ENCODE measurements at regions of chr15 and their contacts with region 1.

Region 1: DNA sequence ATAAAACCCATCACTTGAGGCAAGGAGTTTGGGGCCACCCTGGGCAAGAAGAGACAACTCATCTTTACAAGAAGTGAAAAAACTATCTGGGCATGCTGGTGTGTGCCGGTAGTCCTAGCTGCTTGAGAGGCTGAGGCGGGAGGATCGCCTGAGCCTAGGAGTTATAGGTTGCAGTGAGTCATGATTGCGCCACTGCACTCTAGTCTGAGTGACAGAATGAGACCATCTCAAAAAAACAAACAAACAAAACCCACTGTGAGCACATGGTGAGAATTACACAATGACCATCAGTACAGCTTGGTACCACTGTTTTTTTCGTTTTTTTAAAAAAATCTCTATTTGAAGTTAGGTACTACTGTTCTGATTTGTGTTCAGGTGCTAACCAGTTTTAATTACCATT is 13.6 kb downstream of the VPS39 start:
- DNase-seq: no peak
- H3K4me3 Mint-ChIP-seq: no peak overlapping the region
- H3K27ac Mint-ChIP-seq: peak overlapping the region; percentile 48
- H3K4me1 Mint-ChIP-seq: peaks cover 32% of the 10 kb centered on the region
- H3K27me3 Mint-ChIP-seq: no peaks in the 10 kb centered on the region

Region 2: DNA sequence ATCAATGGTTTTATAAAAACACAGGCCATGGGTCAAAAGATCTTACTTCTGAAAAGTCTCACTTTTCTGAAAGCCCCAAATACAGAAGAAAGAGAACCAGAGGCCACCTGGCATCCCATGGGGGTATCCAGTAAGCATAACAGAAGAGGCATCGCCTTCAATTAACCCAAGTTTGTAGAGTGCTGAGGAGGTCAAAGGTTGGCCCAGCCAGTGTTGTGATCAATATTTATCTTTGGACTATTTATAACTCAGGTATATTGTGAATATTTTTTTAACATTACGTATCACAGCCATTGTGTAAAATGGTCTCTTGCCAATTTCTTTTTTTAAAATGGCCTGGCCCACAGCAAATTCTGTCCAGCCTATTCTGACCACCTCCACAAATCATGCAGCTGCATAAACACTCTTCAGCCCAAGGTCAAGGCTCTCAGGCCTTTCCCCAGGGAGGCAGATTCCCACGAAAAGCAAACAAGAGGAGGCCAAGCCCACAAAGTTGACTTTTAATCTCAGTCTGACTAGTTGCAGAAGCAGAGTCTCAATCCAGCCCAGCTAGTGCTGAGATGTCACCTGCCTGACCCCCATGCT is 274.5 kb before region 1 on chr15:
- intact Hi-C with region 1: no loop called
- DNase-seq: no peak
- H3K4me3 Mint-ChIP-seq: no peak overlapping the region
- H3K27ac Mint-ChIP-seq: no peak overlapping the region
- H3K4me1 Mint-ChIP-seq: peaks cover 51% of the 10 kb centered on the region
- H3K27me3 Mint-ChIP-seq: no peaks in the 10 kb centered on the region

Region 3: DNA sequence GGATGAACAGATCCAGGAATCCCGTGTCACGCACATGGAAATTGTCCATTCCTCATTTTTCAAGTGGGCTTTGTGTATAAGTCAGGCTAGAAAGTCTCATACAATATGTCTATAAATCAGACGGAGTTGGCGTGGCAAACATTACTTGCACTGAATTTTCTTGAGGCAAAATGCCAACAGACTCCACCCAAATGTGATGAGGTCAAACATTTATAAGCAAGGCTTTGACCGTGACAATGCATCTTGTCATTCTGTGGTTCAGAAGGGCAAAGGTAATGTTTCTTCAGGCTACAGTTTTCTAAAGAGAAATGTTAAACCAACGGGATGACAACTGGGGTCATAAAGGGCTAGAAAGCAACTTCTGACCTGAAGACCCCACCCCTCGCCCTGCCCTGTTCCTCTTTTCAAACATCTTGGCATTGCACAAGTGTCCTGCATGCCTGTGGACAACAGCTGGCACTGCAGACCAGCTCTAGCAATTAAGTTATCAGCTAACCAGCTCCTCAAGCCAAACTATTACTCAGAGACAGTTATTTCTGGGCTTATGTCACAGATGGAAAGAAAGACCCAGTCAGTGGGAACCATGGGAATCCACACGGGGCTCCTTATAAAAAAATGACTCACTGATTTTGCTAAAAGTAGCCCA is 264.2 kb before region 1 on chr15:
- intact Hi-C with region 1: loop called (anchors 10 kb)
- DNase-seq: no peak
- H3K4me3 Mint-ChIP-seq: no peak overlapping the region
- H3K27ac Mint-ChIP-seq: no peak overlapping the region
- H3K4me1 Mint-ChIP-seq: peaks cover 60% of the 10 kb centered on the region
- H3K27me3 Mint-ChIP-seq: no peaks in the 10 kb centered on the region

Region 4: DNA sequence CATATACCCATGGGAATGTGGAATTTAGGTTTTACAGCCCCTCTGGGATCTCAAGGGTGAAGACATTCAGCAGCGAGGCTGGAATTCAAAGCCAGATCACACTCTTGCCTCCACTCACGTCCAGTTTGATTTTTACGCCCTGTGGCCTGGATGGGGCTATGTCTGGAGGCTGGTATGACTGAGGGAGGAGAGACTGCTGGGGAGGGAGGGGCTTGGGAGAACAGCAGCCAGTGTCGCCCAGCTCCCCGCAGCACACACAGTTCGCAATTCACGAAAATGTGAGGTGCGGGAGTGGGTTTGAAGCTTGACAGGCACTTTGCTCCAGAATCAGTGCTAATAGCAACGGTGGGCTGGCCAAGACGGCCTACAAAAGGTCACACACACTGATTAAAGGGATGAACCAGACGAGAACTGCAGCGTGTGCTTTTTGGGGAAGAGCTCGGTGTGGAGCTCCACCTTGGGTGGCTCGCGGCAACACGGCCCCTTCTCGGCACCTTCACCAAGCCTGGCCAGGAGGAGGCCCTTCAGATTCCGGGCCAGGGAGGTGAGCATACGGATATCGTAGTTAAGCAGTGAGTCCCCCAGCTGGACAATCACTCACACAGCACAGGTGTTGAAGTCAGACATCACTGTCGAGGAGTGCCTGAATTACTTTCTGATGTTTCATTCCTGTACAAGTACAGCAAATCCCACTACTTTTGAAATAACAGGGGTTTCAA is 238.5 kb before region 1 on chr15:
- intact Hi-C with region 1: no loop called
- DNase-seq: no peak
- H3K4me3 Mint-ChIP-seq: no peak overlapping the region
- H3K27ac Mint-ChIP-seq: no peak overlapping the region
- H3K4me1 Mint-ChIP-seq: peaks cover 39% of the 10 kb centered on the region
- H3K27me3 Mint-ChIP-seq: no peaks in the 10 kb centered on the region

Region 5: DNA sequence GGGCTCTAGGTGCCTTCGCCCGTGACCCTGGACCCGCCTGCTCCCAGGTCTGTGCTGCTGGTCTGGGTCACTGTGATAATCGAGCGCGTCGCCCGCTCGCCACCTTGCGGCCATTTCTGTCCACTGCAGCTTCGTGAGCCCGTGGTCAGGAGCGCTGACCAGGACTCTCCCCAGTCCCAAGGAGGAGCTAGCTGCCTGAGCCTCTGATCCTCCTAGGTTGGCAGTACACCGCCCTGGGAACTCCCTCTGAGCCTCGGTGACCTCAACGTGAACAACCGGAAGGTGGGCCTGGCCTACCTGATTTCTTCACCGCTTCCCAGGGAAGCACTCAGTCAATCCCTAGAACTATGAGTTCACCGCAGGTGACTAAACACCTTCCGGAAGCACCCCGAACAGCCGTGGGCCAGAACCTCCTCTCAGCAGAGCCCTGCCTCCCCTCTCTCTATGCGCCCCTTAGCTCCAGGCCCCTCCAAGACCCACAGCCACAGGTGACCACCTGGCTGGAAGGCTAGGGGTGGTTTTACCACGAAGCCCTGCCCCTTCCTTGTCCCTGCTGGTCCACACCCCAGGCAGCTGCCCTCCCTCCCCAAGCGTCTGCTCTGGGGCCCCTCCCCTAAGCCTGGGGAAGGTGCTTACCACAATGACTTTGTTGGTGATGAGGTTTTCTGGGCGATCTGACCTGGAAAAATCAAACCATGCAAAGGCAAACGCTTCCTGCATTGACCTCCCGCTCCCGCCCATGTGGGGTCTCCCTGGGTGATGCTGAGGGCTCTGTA is 109.9 kb before region 1 on chr15:
- intact Hi-C with region 1: no loop called
- DNase-seq: no peak
- H3K4me3 Mint-ChIP-seq: no peak overlapping the region
- H3K27ac Mint-ChIP-seq: no peak overlapping the region
- H3K4me1 Mint-ChIP-seq: peaks cover 6% of the 10 kb centered on the region
- H3K27me3 Mint-ChIP-seq: peaks cover 6% of the 10 kb centered on the region

Region 6: GRCh38 chr15:42184296-42184695 is 10.2 kb before region 1 on chr15:
- intact Hi-C with region 1: no loop called
- DNase-seq: no peak
- H3K4me3 Mint-ChIP-seq: no peak overlapping the region
- H3K27ac Mint-ChIP-seq: no peak overlapping the region
- H3K4me1 Mint-ChIP-seq: no peaks in the 10 kb centered on the region
- H3K27me3 Mint-ChIP-seq: no peaks in the 10 kb centered on the region

Region 7: GRCh38 chr15:42207674-42208579 is 13.4 kb after region 1 on chr15 and contains the start of gene VPS39:
- intact Hi-C with region 1: loop called (anchors 1 kb)
- DNase-seq: peak; percentile 78
- H3K4me3 Mint-ChIP-seq: peak within 1 kb of the TSS; percentile 97
- H3K27ac Mint-ChIP-seq: peak within 1 kb of the TSS; percentile 96
- H3K4me1 Mint-ChIP-seq: peaks cover 29% of the 10 kb centered on the region
- H3K27me3 Mint-ChIP-seq: no peaks in the 10 kb centered on the region
- total RNA-seq, gene VPS39: 63.8 and 66.0 TPM in 2 replicates

Measured in activated T-helper 1 cell treated with anti-CD3 and anti-CD28 coated beads, Interleukin-12 subunit alpha, Interleukin-12 subunit beta, Interleukin-2, Interleukin-4 antibody, amounts not matched to agents 30 ng/mL and 10 ng/mL and 1 ng/mL, durations not matched to agents 14 hours and 24 hours and 36 hours (primary cell).